Natural killer cell (primary cell): ENCODE measurements at regions of chr7 and their contacts with region 1.

Region 1: GRCh38 chr7:121547544-121548092 is 151.5 kb upstream of the FAM3C start:
- DNase-seq: peak in 1 of 2 donors; percentile 77
- ATAC-seq: peak; percentile 82 to 94 (median 82)
- H3K4me3 ChIP-seq: no peak overlapping the region
- H3K4me3 Mint-ChIP-seq: no peak overlapping the region
- H3K27ac ChIP-seq: no peak overlapping the region
- H3K27ac Mint-ChIP-seq: no peak overlapping the region
- H3K4me1 ChIP-seq: peaks cover 3% of the 10 kb centered on the region
- H3K4me1 Mint-ChIP-seq: peaks cover 31 to 34% of the 10 kb centered on the region in 2 donors
- H3K27me3 ChIP-seq: no peaks in the 10 kb centered on the region
- H3K27me3 Mint-ChIP-seq: no peaks in the 10 kb centered on the region
- CTCF ChIP-seq: peak; percentile 92

Region 2: GRCh38 chr7:121366852-121367431 is 180.7 kb before region 1 on chr7:
- intact Hi-C with region 1: loop called (anchors 1 kb)
- DNase-seq: peak in 1 of 2 donors; percentile 74
- ATAC-seq: peak; percentile 52 to 80 (median 54)
- H3K4me3 ChIP-seq: no peak overlapping the region
- H3K4me3 Mint-ChIP-seq: no peak overlapping the region
- H3K27ac ChIP-seq: no peak overlapping the region
- H3K27ac Mint-ChIP-seq: peak overlapping the region in 1 of 2 donors; percentile 69
- H3K4me1 ChIP-seq: peaks cover 12% of the 10 kb centered on the region
- H3K4me1 Mint-ChIP-seq: peaks cover 12 to 28% of the 10 kb centered on the region in 2 donors
- H3K27me3 ChIP-seq: no peaks in the 10 kb centered on the region
- H3K27me3 Mint-ChIP-seq: no peaks in the 10 kb centered on the region
- CTCF ChIP-seq: peak; percentile 87

Region 3: DNA sequence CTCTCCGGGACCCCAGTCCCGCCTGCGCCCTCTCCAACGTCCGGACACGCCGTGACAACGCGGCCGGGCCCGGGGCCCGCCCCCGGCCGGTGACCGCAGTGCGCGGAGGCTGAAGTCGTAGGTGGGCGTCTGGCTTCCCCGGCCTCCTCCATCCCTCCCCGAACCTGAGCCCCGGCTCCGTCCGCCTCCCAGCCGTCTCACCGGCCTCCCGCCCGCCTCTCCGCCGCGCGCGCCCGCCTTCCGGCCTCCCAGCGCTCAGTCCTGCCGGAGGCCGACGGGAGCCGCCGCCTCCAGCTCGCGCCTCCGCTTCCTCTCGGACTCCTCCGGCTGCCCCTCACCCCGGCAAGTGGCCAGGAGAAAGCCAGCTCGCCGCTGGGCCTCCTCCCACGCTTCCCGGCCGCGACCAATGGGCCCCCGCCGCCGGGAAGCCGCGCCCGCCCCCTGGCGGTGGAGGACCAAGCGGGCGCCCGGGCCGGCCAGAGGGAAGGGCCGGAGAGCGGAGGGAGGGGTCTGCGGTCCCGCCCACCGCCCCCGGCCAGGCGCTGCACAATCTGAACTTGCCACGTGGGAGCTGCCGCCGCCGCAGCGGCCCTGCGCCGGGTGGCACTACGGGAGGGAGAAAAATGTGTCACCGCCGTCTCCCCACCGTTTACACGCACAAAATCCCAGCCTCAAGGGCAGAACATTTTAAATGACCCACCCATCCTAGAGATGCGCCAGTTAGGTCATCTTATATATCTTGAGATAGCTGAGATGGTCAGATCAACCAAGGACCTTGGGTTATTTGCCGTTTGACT is 151.5 kb before region 1 on chr7 and contains the start of gene FAM3C:
- intact Hi-C with region 1: loop called (anchors 1 kb)
- DNase-seq: peak; percentile 86
- ATAC-seq: peak; percentile 89 to 96 (median 91)
- H3K4me3 ChIP-seq: peak within 1 kb of the TSS; percentile 68
- H3K4me3 Mint-ChIP-seq: peak within 1 kb of the TSS; percentile 92
- H3K27ac ChIP-seq: peak within 1 kb of the TSS; percentile 76
- H3K27ac Mint-ChIP-seq: peak within 1 kb of the TSS; percentile 83 to 90
- H3K4me1 ChIP-seq: peaks cover 2% of the 10 kb centered on the region
- H3K4me1 Mint-ChIP-seq: peaks cover 26 to 28% of the 10 kb centered on the region in 2 donors
- H3K27me3 ChIP-seq: no peaks in the 10 kb centered on the region
- H3K27me3 Mint-ChIP-seq: no peaks in the 10 kb centered on the region
- CTCF ChIP-seq: peak; percentile 97
- total RNA-seq, gene FAM3C: 24.3 to 42.1 (median 37.0) TPM

Region 4: DNA sequence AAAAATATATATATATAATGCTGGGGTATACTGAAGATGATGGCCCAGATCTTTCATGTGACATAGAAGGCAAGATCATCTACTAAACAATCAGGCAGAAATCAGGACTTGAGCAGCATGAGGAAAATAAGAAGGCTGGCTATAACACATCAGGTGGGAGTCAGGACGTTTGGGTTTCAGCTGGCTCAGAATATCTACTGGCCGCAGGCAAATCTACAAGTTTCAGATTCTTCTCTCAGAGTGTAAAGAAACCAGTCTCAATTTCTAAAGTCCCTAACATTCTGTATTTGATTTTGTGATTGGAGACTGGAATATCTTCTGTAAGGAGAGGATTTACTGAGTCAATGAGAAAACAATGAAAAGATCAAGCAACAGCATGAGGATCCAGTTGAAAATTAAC is 113.8 kb before region 1 on chr7:
- intact Hi-C with region 1: loop called (anchors 10 kb)
- DNase-seq: no peak
- ATAC-seq: no peak
- H3K4me3 ChIP-seq: no peak overlapping the region
- H3K4me3 Mint-ChIP-seq: no peak overlapping the region
- H3K27ac ChIP-seq: no peak overlapping the region
- H3K27ac Mint-ChIP-seq: no peak overlapping the region
- H3K4me1 ChIP-seq: peaks cover 11% of the 10 kb centered on the region
- H3K4me1 Mint-ChIP-seq: peaks cover 11 to 12% of the 10 kb centered on the region in 2 donors
- H3K27me3 ChIP-seq: no peaks in the 10 kb centered on the region
- H3K27me3 Mint-ChIP-seq: no peaks in the 10 kb centered on the region
- CTCF ChIP-seq: no peak

Region 5: GRCh38 chr7:121591926-121592325 is 44.3 kb after region 1 on chr7:
- intact Hi-C with region 1: no loop called
- DNase-seq: no peak
- ATAC-seq: no peak
- H3K4me3 ChIP-seq: no peak overlapping the region
- H3K4me3 Mint-ChIP-seq: no peak overlapping the region
- H3K27ac ChIP-seq: no peak overlapping the region
- H3K27ac Mint-ChIP-seq: no peak overlapping the region
- H3K4me1 ChIP-seq: no peaks in the 10 kb centered on the region
- H3K4me1 Mint-ChIP-seq: no peaks in the 10 kb centered on the region
- H3K27me3 ChIP-seq: no peaks in the 10 kb centered on the region
- H3K27me3 Mint-ChIP-seq: peaks cover 3 to 13% of the 10 kb centered on the region in 2 donors
- CTCF ChIP-seq: no peak